Heart right ventricle (tissue), 16 donors: ENCODE measurements at regions of chr9 and their contacts with region 1.

Region 1: GRCh38 chr9:2727966-2728613 is 10.8 kb downstream of the KCNV2 start:
- DNase-seq: peak in 1 of 2 donors; percentile 69
- ATAC-seq: peak; percentile 46 to 89 (median 81)
- H3K4me3 ChIP-seq: no peak overlapping the region
- H3K27ac ChIP-seq: peak overlapping the region in 3 of 10 donors; percentile 12 to 41 (median 24)
- H3K4me1 ChIP-seq: peaks cover 0 to 26% (median 11%) of the 10 kb centered on the region in 9 donors
- H3K27me3 ChIP-seq: no peaks in the 10 kb centered on the region
- CTCF ChIP-seq: peak; percentile 36 to 85 (median 73)

Region 2: DNA sequence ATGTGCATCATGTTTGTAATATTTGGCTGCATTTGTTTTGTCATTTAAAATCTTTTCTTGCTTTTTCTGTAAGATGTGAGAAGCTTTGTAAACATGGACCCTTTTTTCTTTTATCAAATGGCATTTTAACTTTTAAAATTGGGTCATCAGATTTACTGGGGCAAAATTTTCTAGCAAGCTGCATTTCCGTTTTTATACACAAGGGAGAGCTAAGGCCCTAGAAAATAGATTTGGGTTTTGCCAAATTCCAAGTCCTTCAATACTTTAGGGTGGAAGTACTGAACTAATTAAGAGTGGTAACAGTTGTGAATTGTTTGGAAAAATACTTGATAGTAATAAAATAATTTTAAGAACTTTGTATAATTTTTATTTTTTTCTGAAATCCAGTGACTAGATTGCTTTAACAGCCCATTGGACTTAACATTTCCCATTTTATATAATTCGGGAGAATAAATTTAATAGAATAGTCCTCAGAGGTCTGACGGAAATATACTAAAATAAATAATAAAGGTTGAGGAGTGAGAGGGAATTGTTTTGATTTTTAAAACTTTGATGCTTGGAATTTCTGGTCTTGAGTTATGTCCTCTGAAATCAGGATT is 595.5 kb before region 1 on chr9:
- intact Hi-C with region 1: loop called in 6 of 10 experiments (anchors 2 to 10 kb)
- DNase-seq: no peak
- ATAC-seq: peak in 2 of 8 donors; percentile 26 to 37
- H3K4me3 ChIP-seq: no peak overlapping the region
- H3K27ac ChIP-seq: peak overlapping the region in 3 of 10 donors; percentile 0 to 6 (median 4)
- H3K4me1 ChIP-seq: peaks cover 5 to 63% (median 40%) of the 10 kb centered on the region in 9 donors
- H3K27me3 ChIP-seq: no peaks in the 10 kb centered on the region
- CTCF ChIP-seq: peak; percentile 61 to 86 (median 74)

Region 3: DNA sequence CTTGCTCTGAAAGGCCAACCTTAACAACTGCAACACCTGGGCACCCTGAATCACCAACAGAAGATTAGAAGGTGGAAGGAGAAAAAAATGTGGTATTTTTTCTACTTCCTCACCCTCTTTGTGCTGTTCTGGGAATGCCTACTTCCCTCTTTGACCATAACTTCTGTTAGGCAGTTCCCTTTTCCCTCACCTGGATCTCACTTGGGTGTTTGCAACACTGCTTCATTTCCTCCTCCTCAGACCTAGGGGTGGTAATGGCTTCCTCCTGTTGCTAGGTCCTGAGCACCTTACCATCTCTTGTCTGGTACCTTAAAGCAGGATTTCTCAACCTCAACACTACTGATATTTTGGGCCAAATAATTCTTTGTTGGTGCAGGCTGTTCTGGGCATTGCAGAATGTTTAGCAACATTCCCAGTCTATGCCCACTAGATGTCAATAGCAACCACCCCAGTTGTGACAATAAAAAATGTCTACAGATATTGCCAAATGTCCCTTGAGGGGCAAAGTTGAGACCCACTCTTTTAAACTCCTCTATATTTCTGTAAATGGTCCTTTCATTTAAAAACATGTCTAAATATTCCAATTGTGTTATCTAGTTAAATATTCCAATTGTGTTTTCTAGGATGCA is 406.5 kb before region 1 on chr9:
- intact Hi-C with region 1: loop called in 3 of 10 experiments (anchors 10 kb)
- DNase-seq: no peak
- ATAC-seq: peak in 1 of 8 donors; percentile 42
- H3K4me3 ChIP-seq: no peak overlapping the region
- H3K27ac ChIP-seq: no peak overlapping the region
- H3K4me1 ChIP-seq: no peaks in the 10 kb centered on the region
- H3K27me3 ChIP-seq: no peaks in the 10 kb centered on the region
- CTCF ChIP-seq: peak in 7 of 9 donors; percentile 25 to 48 (median 33)

Region 4: DNA sequence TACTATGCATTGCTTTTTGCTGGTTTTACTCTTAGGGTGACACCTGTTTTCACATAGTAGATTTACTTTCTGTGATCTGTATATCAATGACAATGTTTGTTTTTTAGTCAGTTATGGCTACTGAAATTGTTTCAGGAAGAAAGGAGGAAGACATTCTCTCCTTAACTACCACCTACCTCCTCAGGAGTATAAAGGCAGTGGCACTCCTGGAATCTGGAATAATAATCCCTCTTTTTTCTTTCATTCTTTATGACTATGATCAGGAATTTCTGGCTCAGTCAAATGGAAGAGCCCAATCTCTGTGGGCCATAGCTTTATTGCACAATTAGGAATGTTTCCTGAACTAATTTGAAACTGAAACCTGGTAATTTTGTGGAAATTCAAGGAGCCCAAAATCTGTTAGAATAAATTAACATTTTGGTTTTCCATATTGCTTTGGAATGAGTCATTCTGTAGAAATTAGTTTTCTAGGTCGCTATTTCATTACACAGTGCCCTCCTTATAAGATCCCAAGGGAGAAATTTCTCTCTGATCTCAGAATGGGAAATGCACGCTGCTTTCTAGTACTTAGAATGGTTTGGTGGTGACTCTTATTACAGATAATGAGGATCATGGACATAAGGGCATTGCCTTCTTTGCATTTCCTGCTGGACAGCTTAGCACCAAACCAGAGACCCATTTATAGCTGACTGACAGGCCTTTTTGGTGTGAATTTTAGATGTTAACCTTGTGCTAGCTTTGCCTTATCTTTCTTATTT is 201.8 kb before region 1 on chr9:
- intact Hi-C with region 1: no loop called
- DNase-seq: no peak
- ATAC-seq: no peak
- H3K4me3 ChIP-seq: no peak overlapping the region
- H3K27ac ChIP-seq: no peak overlapping the region
- H3K4me1 ChIP-seq: peaks cover 0 to 5% (median 0%) of the 10 kb centered on the region in 9 donors
- H3K27me3 ChIP-seq: no peaks in the 10 kb centered on the region
- CTCF ChIP-seq: no peak

Region 5: GRCh38 chr9:2559212-2560152 is 168.6 kb before region 1 on chr9:
- intact Hi-C with region 1: loop called in 1 of 10 experiments (anchors 5 kb)
- DNase-seq: peak; percentile 71 to 92
- ATAC-seq: peak; percentile 98 to 100 (median 99)
- H3K4me3 ChIP-seq: no peak overlapping the region
- H3K27ac ChIP-seq: peak overlapping the region; percentile 68 to 94 (median 86)
- H3K4me1 ChIP-seq: peaks cover 7 to 30% (median 25%) of the 10 kb centered on the region in 9 donors
- H3K27me3 ChIP-seq: no peaks in the 10 kb centered on the region
- CTCF ChIP-seq: no peak

Region 6: GRCh38 chr9:2634153-2634552 is 93.9 kb before region 1 on chr9:
- intact Hi-C with region 1: no loop called
- DNase-seq: no peak
- ATAC-seq: peak in 7 of 8 donors; percentile 46 to 67 (median 63)
- H3K4me3 ChIP-seq: peak overlapping the region in 3 of 10 donors; percentile 0 to 14 (median 11)
- H3K27ac ChIP-seq: peak overlapping the region in 8 of 10 donors; percentile 2 to 75 (median 41)
- H3K4me1 ChIP-seq: peaks cover 4 to 66% (median 40%) of the 10 kb centered on the region in 9 donors
- H3K27me3 ChIP-seq: no peaks in the 10 kb centered on the region
- CTCF ChIP-seq: no peak

Region 7: DNA sequence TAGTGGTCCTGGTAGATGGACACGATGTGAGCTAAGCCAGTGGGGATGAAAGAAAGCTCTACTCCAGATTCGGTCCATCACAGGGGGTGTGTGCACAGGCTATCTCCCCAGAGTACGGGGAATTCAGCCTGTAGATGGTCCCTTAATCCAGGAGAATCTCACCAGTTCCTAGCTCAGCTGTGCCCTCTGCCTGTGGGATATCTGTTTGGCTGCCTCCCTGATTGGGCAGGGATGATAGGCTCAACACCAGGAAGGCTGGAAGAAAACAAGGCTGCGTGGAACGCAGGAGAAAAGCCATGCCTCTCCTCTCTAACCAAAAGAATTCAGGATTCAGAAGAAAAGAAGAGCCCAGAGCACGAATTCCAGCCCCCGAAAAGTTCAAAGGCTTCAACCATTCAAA is 65.6 kb before region 1 on chr9:
- intact Hi-C with region 1: loop called in 4 of 10 experiments (anchors 5 to 10 kb)
- DNase-seq: no peak
- ATAC-seq: peak in 3 of 8 donors; percentile 27 to 38 (median 38)
- H3K4me3 ChIP-seq: no peak overlapping the region
- H3K27ac ChIP-seq: peak overlapping the region in 9 of 10 donors; percentile 56 to 88 (median 73)
- H3K4me1 ChIP-seq: peaks cover 6 to 43% (median 35%) of the 10 kb centered on the region in 9 donors
- H3K27me3 ChIP-seq: no peaks in the 10 kb centered on the region
- CTCF ChIP-seq: peak in 3 of 9 donors; percentile 10 to 23 (median 17)